MCF 10A (cell line): ENCODE measurements at regions of chr5 and their contacts with region 1.

Region 1: DNA sequence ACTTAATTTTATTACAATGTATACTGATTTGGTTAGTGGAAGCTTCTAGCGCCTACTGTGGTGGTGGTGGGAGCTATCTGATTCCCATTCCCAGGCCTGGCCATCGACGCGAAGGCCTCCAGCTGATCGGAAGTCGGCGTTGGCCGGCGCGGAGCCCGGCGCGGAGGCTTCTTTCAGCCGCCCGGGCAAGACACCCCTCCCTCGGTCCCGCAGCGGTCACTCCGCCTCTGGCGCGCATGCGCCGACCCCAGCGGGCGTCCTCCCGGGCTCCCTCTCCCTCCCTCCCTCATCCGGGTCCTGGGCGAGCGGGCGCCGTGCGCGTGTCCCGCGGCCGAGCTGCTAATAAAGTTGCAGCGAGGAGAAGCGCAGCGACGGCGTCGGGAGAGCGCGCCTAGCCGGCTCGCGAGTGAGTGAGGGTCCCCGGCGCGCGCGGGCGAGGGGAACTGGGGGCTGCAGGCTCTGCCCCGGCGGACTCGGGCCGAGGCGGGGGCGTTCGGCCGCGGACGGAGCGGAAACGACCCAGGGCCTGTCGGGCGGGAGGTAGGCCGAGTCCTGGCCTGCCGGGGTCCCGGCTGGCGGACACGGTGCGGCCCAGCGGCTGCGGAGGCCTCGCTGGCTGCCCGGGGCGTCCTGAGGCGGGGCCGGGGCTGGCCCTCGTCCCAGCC is at the start of gene SMAD5:
- DNase-seq: peak; percentile 97
- H3K4me3 Mint-ChIP-seq: peak within 1 kb of the TSS; percentile 89
- H3K27ac Mint-ChIP-seq: peak within 1 kb of the TSS; percentile 97
- H3K4me1 Mint-ChIP-seq: peaks cover 22% of the 10 kb centered on the region
- H3K27me3 Mint-ChIP-seq: no peaks in the 10 kb centered on the region
- CTCF ChIP-seq: no peak
- total RNA-seq, gene SMAD5: 97.4 and 106 TPM in 2 replicates

Region 2: DNA sequence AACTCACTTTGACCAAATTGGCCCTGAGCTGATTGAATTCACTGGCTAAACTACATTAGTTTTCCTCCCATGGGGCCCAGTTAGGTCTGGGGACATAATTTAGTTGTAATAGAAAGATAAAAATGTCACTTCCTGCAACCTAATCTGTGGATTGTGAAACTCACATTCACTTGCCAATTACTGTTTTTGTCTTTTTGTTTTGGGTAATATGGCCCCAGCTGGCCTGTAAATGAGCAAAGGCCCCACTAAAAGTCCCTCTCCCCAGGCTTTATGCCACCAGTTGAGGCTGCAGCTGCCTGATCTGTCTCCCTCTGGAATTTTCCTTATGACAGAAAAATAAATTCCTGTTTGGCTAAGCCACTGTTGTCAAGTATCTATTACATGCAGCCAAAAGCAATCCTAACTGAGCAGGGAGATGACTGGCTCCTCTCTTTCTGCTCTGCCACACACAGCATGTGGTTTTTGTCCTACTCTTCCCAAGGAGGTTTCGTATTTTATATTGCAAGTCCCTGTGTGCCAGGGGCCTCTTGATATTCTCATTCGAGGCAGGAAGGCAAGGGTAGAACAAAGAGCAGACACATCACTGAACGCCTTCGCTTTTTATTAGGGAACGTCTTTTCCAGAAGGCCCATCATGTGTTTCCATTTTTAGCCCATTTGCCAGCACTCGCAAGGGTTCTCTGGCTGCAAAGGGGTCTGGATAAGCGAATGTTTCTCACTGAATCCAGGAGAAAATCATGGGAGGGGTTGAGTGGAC is 322.3 kb before region 1 on chr5:
- CTCF ChIA-PET with region 1: no interaction called
- POLR2A ChIA-PET with region 1: no interaction called
- intact Hi-C with region 1: no loop called
- DNase-seq: no peak
- H3K4me3 Mint-ChIP-seq: no peak overlapping the region
- H3K27ac Mint-ChIP-seq: no peak overlapping the region
- H3K4me1 Mint-ChIP-seq: no peaks in the 10 kb centered on the region
- H3K27me3 Mint-ChIP-seq: peaks cover 33% of the 10 kb centered on the region
- CTCF ChIP-seq: no peak

Region 3: DNA sequence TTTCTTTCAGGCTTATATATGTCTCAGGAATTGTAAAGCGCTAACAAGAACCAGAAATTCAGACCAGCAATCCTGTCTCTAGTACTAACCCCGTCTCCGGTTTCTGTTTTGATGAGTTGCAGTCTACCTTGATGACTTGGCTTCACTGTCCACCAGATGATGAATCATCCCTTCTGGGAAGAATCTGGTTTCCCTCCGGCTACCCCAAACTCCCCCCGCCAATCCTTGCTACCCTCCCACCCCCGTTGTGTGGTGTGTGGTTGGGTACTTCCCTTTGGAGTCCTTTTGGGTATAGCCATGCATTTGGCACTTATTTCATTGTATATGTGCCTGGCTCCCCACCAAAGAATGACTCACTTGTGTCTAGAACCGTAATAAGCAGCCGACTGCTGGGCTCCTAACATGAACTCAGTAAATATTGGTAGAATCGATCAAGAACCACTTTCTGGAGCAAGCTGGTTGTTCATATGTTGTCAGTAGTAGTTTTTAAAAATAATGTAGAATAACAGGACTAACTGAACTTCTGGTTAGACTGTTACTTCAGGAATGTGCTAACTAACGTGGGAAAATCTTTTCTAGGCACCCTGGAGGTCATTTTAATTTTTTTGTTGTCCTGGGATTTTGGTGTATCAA is 112.2 kb before region 1 on chr5:
- CTCF ChIA-PET with region 1: interaction called, 3 read pairs
- POLR2A ChIA-PET with region 1: interaction called, 10 read pairs
- intact Hi-C with region 1: no loop called
- DNase-seq: peak; percentile 100
- H3K4me3 Mint-ChIP-seq: peak overlapping the region; percentile 49
- H3K27ac Mint-ChIP-seq: peak overlapping the region; percentile 63
- H3K4me1 Mint-ChIP-seq: peaks cover 61% of the 10 kb centered on the region
- H3K27me3 Mint-ChIP-seq: no peaks in the 10 kb centered on the region
- CTCF ChIP-seq: no peak

Region 4: GRCh38 chr5:136053336-136054141 is 79.2 kb before region 1 on chr5:
- CTCF ChIA-PET with region 1: no interaction called
- POLR2A ChIA-PET with region 1: interaction called, 14 read pairs
- intact Hi-C with region 1: no loop called
- DNase-seq: peak; percentile 98
- H3K4me3 Mint-ChIP-seq: no peak overlapping the region
- H3K27ac Mint-ChIP-seq: peak overlapping the region; percentile 85
- H3K4me1 Mint-ChIP-seq: peaks cover 52% of the 10 kb centered on the region
- H3K27me3 Mint-ChIP-seq: no peaks in the 10 kb centered on the region
- CTCF ChIP-seq: no peak

Region 5: GRCh38 chr5:136103118-136103517 is 29.6 kb before region 1 on chr5:
- CTCF ChIA-PET with region 1: interaction called, 17 read pairs
- POLR2A ChIA-PET with region 1: interaction called, 42 read pairs
- intact Hi-C with region 1: no loop called
- DNase-seq: no peak
- H3K4me3 Mint-ChIP-seq: no peak overlapping the region
- H3K27ac Mint-ChIP-seq: no peak overlapping the region
- H3K4me1 Mint-ChIP-seq: peaks cover 10% of the 10 kb centered on the region
- H3K27me3 Mint-ChIP-seq: no peaks in the 10 kb centered on the region
- CTCF ChIP-seq: no peak

Region 6: DNA sequence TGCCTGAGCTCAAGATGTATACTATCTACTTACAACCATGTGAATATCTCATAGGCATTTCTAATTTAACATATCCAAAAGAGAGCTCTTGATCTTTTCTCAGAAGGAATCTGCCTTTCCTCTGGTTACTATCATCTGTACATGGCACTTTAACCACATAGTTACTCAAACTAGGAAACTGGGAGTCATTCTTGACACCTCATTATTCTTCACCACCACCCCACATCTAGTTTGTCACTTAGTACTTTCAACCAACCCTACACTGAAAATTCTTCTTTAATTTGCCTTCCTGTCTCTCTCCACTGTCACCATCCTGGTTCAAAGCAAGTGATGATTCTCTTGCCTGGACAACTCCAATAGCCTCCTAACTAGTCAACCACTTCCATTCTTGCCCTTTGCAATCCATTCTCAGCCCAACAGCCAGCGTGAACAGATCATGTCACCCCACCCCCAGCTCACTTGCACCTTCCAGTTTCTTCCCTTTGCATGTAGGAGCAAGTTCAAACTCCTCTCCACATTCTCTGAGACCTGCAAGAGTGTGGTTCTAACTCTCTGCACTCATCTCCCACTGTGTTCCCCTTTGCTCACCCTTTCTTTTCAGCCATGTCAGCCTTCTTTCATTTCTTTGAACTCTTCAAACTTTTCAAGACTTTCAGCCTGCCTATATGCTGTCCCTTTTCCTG is 17.4 kb before region 1 on chr5:
- CTCF ChIA-PET with region 1: interaction called, 17 read pairs
- POLR2A ChIA-PET with region 1: interaction called, 88 read pairs
- intact Hi-C with region 1: no loop called
- DNase-seq: no peak
- H3K4me3 Mint-ChIP-seq: no peak overlapping the region
- H3K27ac Mint-ChIP-seq: no peak overlapping the region
- H3K4me1 Mint-ChIP-seq: no peaks in the 10 kb centered on the region
- H3K27me3 Mint-ChIP-seq: no peaks in the 10 kb centered on the region
- CTCF ChIP-seq: no peak